ENCODE measurements at regions of chr12 and their contacts with region 1.

Region 1: GRCh38 chr12:110065540-110065939 is 17.2 kb upstream of the C12orf76 start:
- DNase-seq: peak; percentile 36
- H3K4me3 Mint-ChIP-seq: no peak overlapping the region
- H3K27ac Mint-ChIP-seq: no peak overlapping the region
- H3K4me1 Mint-ChIP-seq: peaks cover 14% of the 10 kb centered on the region
- H3K27me3 Mint-ChIP-seq: no peaks in the 10 kb centered on the region

Region 2: DNA sequence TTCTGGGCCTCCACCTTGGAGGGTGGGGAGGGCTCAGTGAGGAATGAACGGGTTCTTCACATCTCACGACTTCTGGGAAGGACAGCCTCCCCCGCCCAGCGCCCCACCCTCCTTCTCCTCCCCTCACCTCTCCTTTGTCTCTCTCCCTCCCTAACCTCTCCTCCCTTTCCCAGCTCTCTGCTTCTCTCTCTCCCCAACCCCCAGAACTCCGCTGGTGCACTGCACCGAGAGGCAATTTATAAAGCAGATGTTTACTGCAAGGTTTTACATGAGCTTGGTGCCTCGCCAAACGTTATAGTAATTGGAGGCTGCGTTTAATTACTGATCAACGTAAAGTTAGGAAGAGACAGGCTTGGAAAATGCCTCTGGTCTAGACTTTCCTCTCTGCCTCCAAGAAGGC is 394.8 kb before region 1 on chr12:
- CTCF ChIA-PET with region 1: no interaction called
- POLR2A ChIA-PET with region 1: no interaction called
- intact Hi-C with region 1: no loop called
- DNase-seq: no peak
- H3K4me3 Mint-ChIP-seq: no peak overlapping the region
- H3K27ac Mint-ChIP-seq: no peak overlapping the region
- H3K4me1 Mint-ChIP-seq: no peaks in the 10 kb centered on the region
- H3K27me3 Mint-ChIP-seq: peaks cover 11% of the 10 kb centered on the region

Region 3: GRCh38 chr12:110039085-110039807 is 26.3 kb before region 1 on chr12:
- CTCF ChIA-PET with region 1: no interaction called
- POLR2A ChIA-PET with region 1: no interaction called
- intact Hi-C with region 1: loop called (anchors 1 kb)
- DNase-seq: peak; percentile 68
- H3K4me3 Mint-ChIP-seq: no peak overlapping the region
- H3K27ac Mint-ChIP-seq: peak overlapping the region; percentile 96
- H3K4me1 Mint-ChIP-seq: peaks cover 47% of the 10 kb centered on the region
- H3K27me3 Mint-ChIP-seq: no peaks in the 10 kb centered on the region